ENCODE measurements at regions of chr6 and their contacts with region 1.

Region 1: DNA sequence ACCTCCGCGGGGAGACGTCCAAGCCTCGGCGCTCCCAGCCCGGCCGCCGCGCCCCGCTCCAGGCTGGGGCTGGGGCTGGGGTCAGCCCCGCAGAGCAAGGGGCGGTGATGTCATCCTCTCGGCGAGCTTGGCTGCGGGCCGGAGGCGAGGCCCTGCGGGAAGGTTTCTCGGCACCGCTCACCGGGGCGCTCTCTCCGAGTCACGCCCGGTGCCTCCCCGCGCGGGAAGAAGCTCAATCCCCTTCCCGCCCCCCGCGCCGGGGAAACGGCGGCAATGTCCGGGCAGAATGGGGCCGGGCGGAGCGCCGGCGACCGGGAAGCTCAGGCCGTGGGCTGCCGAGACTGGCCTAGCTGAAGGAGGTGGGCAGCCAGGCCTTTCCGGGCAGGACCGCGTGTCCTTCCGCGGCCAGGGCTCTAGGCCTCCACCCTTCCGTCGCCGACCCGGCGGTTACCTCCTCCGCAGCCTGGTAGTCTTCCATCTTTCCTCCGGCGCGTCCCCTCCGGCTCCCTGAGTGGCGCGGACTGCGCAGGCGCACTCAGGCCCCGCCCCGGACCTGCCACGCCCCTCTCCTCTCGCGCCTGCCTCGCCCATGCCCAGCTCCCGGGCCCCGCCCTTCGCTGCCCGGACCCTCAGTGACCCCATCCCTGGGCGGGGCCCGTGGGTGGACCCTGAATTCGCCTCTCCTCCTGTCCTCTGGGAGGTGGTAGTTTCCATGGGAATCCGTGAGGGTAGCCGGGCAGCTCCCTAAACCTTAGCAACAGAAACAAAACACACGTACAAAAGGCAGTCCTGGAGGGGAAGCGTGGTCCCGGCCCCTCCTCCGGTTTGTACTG is at the start of gene DYNLT1:
- DNase-seq: peak; percentile 91
- H3K4me3 Mint-ChIP-seq: peak within 1 kb of the TSS; percentile 97
- H3K27ac Mint-ChIP-seq: peak within 1 kb of the TSS; percentile 99
- H3K4me1 Mint-ChIP-seq: peaks cover 76% of the 10 kb centered on the region
- H3K27me3 Mint-ChIP-seq: no peaks in the 10 kb centered on the region
- total RNA-seq, gene DYNLT1: 99.1 to 107 TPM

Region 2: GRCh38 chr6:157879873-157880254 is 764.6 kb before region 1 on chr6:
- CTCF ChIA-PET with region 1: no interaction called
- intact Hi-C with region 1: loop called (anchors 5 kb)
- DNase-seq: peak; percentile 55
- H3K4me3 Mint-ChIP-seq: no peak overlapping the region
- H3K27ac Mint-ChIP-seq: peak overlapping the region; percentile 78
- H3K4me1 Mint-ChIP-seq: peaks cover 87% of the 10 kb centered on the region
- H3K27me3 Mint-ChIP-seq: no peaks in the 10 kb centered on the region

Region 3: DNA sequence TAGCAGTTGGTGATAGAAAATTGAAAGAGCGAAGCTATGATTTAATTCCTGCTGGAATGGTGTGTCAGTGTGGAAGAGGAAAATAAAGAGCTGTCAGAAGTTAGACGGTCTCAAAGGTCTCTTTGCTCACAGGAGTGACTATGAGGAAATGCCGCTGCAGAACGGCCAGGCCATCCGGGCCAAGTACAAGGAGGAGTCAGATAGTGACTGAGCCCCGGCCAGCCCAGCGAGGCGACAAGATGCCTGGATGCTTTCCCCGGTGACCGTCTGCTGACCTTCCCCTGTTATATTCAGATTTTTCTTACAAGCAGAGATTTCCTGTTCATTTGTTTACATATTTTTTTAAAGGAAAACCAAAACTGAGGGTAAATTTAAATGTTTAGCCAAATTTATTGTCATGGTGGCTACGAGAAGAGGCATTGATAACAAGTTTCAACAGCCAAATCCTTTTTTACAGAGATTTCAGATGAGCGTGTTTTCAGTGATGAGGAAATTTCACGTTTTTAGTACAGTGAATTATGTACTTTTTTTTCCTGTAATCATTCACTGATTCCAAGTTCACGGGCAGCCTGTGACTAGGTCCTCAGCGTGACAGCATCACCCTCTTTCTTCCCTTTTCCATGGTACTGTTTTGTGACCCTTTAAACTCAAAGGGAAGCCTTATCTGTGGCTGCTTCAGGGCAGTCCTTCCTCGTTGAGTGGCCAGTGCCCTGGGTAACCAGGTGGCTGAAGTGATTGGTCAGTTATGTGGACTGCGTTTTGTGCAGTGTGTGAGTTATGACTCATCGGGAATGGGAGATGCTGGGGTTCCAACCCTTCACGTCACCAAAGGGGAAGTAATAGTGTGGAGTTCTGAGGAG is 12.5 kb before region 1 on chr6:
- CTCF ChIA-PET with region 1: interaction called, 4 read pairs
- intact Hi-C with region 1: loop called (anchors 1 kb)
- DNase-seq: no peak
- H3K4me3 Mint-ChIP-seq: no peak overlapping the region
- H3K27ac Mint-ChIP-seq: peak overlapping the region; percentile 83
- H3K4me1 Mint-ChIP-seq: peaks cover 46% of the 10 kb centered on the region
- H3K27me3 Mint-ChIP-seq: no peaks in the 10 kb centered on the region

Region 4: GRCh38 chr6:158660333-158660754 is 15.9 kb after region 1 on chr6:
- CTCF ChIA-PET with region 1: interaction called, 14 read pairs
- intact Hi-C with region 1: loop called (anchors 2 kb)
- DNase-seq: peak; percentile 68
- H3K4me3 Mint-ChIP-seq: no peak overlapping the region
- H3K27ac Mint-ChIP-seq: no peak overlapping the region
- H3K4me1 Mint-ChIP-seq: peaks cover 69% of the 10 kb centered on the region
- H3K27me3 Mint-ChIP-seq: no peaks in the 10 kb centered on the region

Region 5: GRCh38 chr6:159761873-159762680 is 1117.6 kb after region 1 on chr6 and contains the start of gene ACAT2:
- CTCF ChIA-PET with region 1: no interaction called
- intact Hi-C with region 1: loop called (anchors 10 kb)
- DNase-seq: peak; percentile 97
- H3K4me3 Mint-ChIP-seq: peak within 1 kb of the TSS; percentile 96
- H3K27ac Mint-ChIP-seq: peak within 1 kb of the TSS; percentile 96
- H3K4me1 Mint-ChIP-seq: peaks cover 42% of the 10 kb centered on the region
- H3K27me3 Mint-ChIP-seq: no peaks in the 10 kb centered on the region
- total RNA-seq, gene ACAT2: 84.9 to 92.4 TPM